Gastrocnemius medialis (tissue), 4 donors: ENCODE measurements at regions of chrX and their contacts with region 1.

Region 1: DNA sequence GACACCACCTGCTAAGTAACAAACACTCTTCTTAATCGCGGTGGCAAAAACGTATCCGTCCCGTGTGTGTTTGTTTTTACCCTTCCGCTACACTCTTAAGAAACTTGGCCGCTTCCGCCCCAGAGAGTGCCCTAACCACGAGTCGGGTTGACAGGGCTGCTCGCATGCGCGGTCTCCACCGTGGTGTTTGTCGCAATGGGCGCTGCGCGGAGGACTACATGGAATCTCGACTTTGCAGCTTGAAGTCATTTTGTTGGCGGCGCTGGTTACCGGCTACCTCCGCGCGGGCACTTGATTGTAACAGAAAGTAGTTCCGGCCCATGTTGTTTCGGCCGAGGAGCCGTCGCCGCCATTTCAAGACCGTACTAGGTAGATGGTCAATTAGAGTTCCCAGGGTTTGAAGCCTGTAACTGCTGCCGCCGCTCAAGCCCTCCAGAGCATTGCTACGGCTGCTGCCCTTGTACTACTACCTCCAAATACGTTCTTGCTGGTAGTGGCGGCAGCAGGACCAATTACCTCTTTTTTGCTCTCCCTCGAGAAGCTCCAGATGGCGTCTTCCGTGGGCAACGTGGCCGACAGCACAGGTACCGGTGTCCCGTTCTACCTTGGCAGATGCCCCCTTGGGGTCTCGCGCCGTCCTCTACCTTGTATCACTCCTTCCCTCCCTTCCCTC is at the start of gene OGT:
- DNase-seq: peak; percentile 94 to 96
- ATAC-seq: peak; percentile 83 to 88
- H3K4me3 ChIP-seq: peak within 1 kb of the TSS; percentile 69 to 87 (median 78)
- H3K27ac ChIP-seq: peak within 1 kb of the TSS; percentile 78 to 95 (median 90)
- H3K4me1 ChIP-seq: peaks cover 1 to 4% of the 10 kb centered on the region in 2 donors
- H3K27me3 ChIP-seq: no peaks in the 10 kb centered on the region
- CTCF ChIP-seq: peak in 1 of 5 experiments; percentile 7
- POLR2A ChIP-seq: peak; percentile 73 to 81
- total RNA-seq, gene OGT: 34.5 to 146 (median 62.1) TPM

Region 2: DNA sequence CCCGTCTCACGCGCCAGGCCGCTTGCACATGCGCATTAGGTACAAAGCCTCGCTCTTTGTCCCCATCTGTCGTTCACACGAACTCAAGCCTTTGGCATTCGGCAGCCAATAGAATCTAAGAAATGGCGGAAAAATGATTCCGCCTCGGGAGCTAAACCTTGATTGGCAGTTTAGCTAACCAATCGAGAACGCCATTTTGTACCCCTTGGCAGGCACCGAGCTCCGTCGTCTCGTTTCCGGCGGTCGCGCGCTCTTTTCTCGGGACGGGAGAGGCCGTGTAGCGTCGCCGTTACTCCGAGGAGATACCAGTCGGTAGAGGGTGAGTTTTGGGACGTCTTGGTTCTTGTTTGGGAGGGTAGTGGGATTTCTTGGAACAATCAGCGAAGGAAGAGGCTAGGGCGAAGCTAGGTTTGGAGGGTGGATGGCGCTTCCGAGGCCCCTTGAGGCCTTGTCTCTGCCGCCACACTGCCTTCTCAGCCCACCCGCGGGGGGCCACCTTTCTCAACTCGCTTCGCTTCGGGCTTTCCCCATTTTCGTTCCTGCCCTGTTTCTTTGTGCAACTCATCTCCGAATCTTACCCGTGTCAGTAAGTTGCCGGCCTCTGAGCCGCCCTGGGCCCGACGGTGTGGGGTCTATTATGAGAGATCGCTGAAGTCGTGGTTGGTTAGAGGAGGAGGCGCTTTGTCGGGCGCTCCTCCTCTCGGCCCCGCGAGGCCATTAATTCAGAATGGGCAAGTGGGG is 249.3 kb before region 1 on chrX and contains the start of gene NONO:
- in situ Hi-C with region 1: no loop called
- intact Hi-C with region 1: loop called (anchors 1 kb)
- DNase-seq: peak; percentile 87 to 88
- ATAC-seq: peak; percentile 99 to 100
- H3K4me3 ChIP-seq: peak within 1 kb of the TSS; percentile 67 to 87 (median 71)
- H3K27ac ChIP-seq: peak within 1 kb of the TSS; percentile 82 to 95 (median 90)
- H3K4me1 ChIP-seq: peaks cover 21 to 23% of the 10 kb centered on the region in 2 donors
- H3K27me3 ChIP-seq: no peaks in the 10 kb centered on the region
- CTCF ChIP-seq: no peak
- POLR2A ChIP-seq: peak; percentile 70 to 74
- total RNA-seq, gene NONO: 90.5 to 101 (median 92.9) TPM

Region 3: GRCh38 chrX:71454222-71454621 is 78.7 kb before region 1 on chrX:
- in situ Hi-C with region 1: no loop called
- intact Hi-C with region 1: no loop called
- DNase-seq: no peak
- ATAC-seq: no peak
- H3K4me3 ChIP-seq: no peak overlapping the region
- H3K27ac ChIP-seq: no peak overlapping the region
- H3K4me1 ChIP-seq: no peaks in the 10 kb centered on the region
- H3K27me3 ChIP-seq: no peaks in the 10 kb centered on the region
- CTCF ChIP-seq: no peak
- POLR2A ChIP-seq: no peak

Region 4: GRCh38 chrX:71492231-71493065 is 40.4 kb before region 1 on chrX:
- in situ Hi-C with region 1: no loop called
- intact Hi-C with region 1: loop called (anchors 5 kb)
- DNase-seq: peak; percentile 26 to 51
- ATAC-seq: peak; percentile 77 to 85
- H3K4me3 ChIP-seq: peak overlapping the region; percentile 57 to 65 (median 58)
- H3K27ac ChIP-seq: peak overlapping the region; percentile 44 to 68 (median 63)
- H3K4me1 ChIP-seq: no peaks in the 10 kb centered on the region
- H3K27me3 ChIP-seq: no peaks in the 10 kb centered on the region
- CTCF ChIP-seq: no peak
- POLR2A ChIP-seq: peak in 1 of 2 donors; percentile 14

Region 5: GRCh38 chrX:71514367-71515038 is 18.4 kb before region 1 on chrX:
- in situ Hi-C with region 1: no loop called
- intact Hi-C with region 1: loop called (anchors 1 kb)
- DNase-seq: no peak
- ATAC-seq: peak; percentile 53 to 68
- H3K4me3 ChIP-seq: no peak overlapping the region
- H3K27ac ChIP-seq: peak overlapping the region; percentile 74 to 89 (median 86)
- H3K4me1 ChIP-seq: peaks cover 4 to 10% of the 10 kb centered on the region in 2 donors
- H3K27me3 ChIP-seq: no peaks in the 10 kb centered on the region
- CTCF ChIP-seq: no peak
- POLR2A ChIP-seq: no peak